ENCODE measurements at regions of chr22 and their contacts with region 1.

Region 1: GRCh38 chr22:21690401-21690801 is 24.6 kb downstream of the PPIL2 start:
- DNase-seq: no peak
- ATAC-seq: peak in 2 of 3 donors; percentile 11 to 39
- H3K4me3 ChIP-seq: no peak overlapping the region
- H3K4me3 Mint-ChIP-seq: peak overlapping the region; percentile 80
- H3K27ac ChIP-seq: peak overlapping the region; percentile 87
- H3K27ac Mint-ChIP-seq: peak overlapping the region; percentile 94 to 98
- H3K4me1 ChIP-seq: peaks cover 35% of the 10 kb centered on the region
- H3K4me1 Mint-ChIP-seq: peaks cover 12 to 33% of the 10 kb centered on the region in 2 donors
- H3K27me3 ChIP-seq: no peaks in the 10 kb centered on the region
- H3K27me3 Mint-ChIP-seq: no peaks in the 10 kb centered on the region
- CTCF ChIP-seq: no peak

Region 2: DNA sequence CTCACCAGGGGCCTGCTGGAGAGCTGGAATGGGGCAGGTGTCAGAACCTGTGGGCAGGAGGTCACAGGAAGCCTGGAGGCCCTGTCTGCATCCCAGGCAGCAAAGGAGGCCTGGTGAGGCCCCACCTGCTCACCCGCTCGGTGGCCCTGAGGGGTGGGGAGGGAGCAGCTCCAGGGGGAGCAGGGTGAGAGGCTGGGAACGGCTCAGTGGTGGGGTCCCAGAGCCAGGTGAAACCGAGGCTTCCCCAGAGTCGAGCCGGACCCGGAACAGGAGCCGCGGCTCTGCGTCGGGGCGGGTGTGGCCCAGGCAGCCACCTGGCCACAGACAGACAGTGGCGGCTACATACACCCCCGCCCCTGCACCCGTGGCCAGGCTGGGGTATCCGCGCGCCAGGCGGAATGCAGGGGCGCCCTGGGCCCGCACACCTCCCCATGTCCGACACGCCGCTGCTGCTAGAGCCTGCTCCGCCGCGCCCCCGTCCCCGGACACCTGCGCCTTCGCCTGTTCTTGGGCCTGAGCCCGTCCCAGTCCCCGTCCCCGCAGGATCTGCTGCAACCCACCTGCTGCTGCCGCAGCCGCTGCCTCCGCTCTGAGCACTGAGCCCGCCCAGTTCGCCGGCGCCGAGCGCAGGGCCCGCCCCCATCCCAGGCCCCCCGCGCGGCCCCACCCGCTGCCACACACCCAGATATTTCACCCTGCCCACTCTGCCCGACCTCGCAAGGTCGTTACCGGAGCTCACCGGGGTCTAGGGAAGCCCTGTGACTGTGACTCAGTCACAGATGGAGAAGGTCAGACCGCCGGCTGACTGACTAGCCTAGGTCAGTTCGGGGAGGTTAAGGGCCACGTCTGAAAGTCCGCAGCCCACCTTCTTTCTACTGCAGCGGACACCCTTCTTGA is 658.2 kb before region 1 on chr22 and contains the start of gene SLC7A4:
- intact Hi-C with region 1: no loop called
- DNase-seq: no peak
- ATAC-seq: peak in 1 of 3 donors; percentile 50
- H3K4me3 ChIP-seq: no peak within 1 kb of the TSS
- H3K4me3 Mint-ChIP-seq: no peak within 1 kb of the TSS
- H3K27ac ChIP-seq: no peak within 1 kb of the TSS
- H3K27ac Mint-ChIP-seq: no peak within 1 kb of the TSS
- H3K4me1 ChIP-seq: peaks cover 9% of the 10 kb centered on the region
- H3K4me1 Mint-ChIP-seq: peaks cover 0 to 4% of the 10 kb centered on the region in 2 donors
- H3K27me3 ChIP-seq: peaks cover 6% of the 10 kb centered on the region
- H3K27me3 Mint-ChIP-seq: peaks cover 10 to 26% of the 10 kb centered on the region in 2 donors
- CTCF ChIP-seq: no peak
- total RNA-seq, gene SLC7A4: not detected

Region 3: DNA sequence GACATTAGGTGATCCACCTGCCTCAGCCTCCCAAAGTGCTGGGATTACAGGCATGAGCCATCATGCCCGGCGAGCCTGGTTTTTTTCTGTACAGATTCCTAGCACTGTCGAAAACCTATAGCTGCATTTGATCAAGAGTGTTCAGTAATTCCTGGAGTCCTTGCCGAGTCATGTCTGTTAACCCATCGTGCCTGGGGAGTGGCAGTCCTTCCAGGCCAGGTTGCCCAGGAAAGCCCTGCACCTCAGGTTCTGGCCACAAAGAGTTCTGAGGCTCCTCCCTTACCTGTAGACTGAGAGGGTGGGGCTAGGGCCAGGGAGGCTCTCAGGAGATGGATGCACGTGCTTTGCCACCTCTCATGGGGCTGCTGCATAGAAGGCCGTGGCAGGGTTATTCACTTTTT is 77.5 kb before region 1 on chr22:
- intact Hi-C with region 1: no loop called
- DNase-seq: no peak
- ATAC-seq: no peak
- H3K4me3 ChIP-seq: no peak overlapping the region
- H3K4me3 Mint-ChIP-seq: no peak overlapping the region
- H3K27ac ChIP-seq: no peak overlapping the region
- H3K27ac Mint-ChIP-seq: no peak overlapping the region
- H3K4me1 ChIP-seq: peaks cover 3% of the 10 kb centered on the region
- H3K4me1 Mint-ChIP-seq: peaks cover 35 to 37% of the 10 kb centered on the region in 2 donors
- H3K27me3 ChIP-seq: no peaks in the 10 kb centered on the region
- H3K27me3 Mint-ChIP-seq: no peaks in the 10 kb centered on the region
- CTCF ChIP-seq: no peak

Region 4: GRCh38 chr22:21760640-21761039 is 70.2 kb after region 1 on chr22:
- intact Hi-C with region 1: loop called (anchors 5 kb)
- DNase-seq: peak in 1 of 2 donors; percentile 53
- ATAC-seq: peak in 2 of 3 donors; percentile 14 to 28
- H3K4me3 ChIP-seq: no peak overlapping the region
- H3K4me3 Mint-ChIP-seq: peak overlapping the region; percentile 73
- H3K27ac ChIP-seq: peak overlapping the region; percentile 88
- H3K27ac Mint-ChIP-seq: peak overlapping the region; percentile 98 to 99
- H3K4me1 ChIP-seq: peaks cover 69% of the 10 kb centered on the region
- H3K4me1 Mint-ChIP-seq: peaks cover 85 to 86% of the 10 kb centered on the region in 2 donors
- H3K27me3 ChIP-seq: no peaks in the 10 kb centered on the region
- H3K27me3 Mint-ChIP-seq: no peaks in the 10 kb centered on the region
- CTCF ChIP-seq: no peak

Measured in natural killer cell (primary cell).